HepG2 (cell line): ENCODE measurements at regions of chr1 and their contacts with region 1.

Region 1: DNA sequence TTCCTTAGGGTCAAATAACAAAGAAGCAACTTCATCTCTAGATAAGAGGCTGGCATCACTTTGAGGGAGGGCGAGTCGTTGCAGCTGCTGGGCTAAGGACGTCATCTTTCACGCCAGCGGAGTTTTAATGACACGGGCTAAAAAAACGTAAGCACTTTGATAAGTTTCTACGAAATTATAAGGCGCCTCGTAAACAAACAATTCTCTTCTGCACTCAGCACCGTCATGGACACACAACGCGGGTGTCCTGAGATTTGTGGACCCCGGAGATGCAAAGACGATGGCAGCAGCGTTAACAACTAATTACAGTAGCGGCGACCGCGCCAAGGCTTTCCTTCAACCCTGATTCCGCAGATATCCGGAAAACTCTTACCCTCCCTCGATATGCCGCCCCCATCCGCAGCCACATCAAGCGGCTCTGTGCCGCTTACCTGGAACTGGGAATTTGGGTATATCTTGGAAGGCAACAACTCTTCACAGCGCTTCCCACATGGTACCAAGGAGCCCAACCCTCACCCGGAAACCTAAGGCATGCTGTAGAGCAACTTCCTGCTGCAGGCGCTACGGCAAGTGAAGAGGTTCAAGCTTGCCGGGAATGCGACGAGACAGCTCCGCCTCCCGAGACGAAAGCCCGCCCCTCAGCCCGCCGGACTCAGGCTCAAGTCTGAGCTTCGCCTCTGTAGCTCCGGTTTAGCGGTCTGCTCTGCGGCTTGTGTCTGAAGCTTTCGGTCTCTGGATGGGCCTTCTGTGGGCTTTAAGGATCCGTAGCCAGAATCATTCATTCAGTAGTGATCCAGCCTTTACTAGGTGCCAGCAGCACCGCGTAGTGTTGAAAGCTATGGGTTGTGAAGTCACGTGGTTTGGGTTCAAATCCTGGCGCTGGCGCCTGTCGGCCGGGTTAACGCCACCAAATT is at the start of gene HEATR1:
- DNase-seq: peak; percentile 90
- ATAC-seq: peak; percentile 99
- H3K4me3 ChIP-seq: peak within 1 kb of the TSS; percentile 75 to 87 (median 82)
- H3K27ac ChIP-seq: peak within 1 kb of the TSS; percentile 54
- H3K4me1 ChIP-seq: peaks cover 15% of the 10 kb centered on the region
- H3K27me3 ChIP-seq: no peaks in the 10 kb centered on the region; a peak in 1 of 5 replicates
- CTCF ChIP-seq: no peak
- EP300 ChIP-seq: no peak; a peak in 1 of 4 replicates
- POLR2A ChIP-seq: peak; percentile 85
- RAD21 ChIP-seq: no peak
- total RNA-seq, gene HEATR1: 45.8 and 80.3 TPM in 2 replicates

Region 2: GRCh38 chr1:236868625-236869467 is 264.6 kb after region 1 on chr1:
- CTCF ChIA-PET with region 1: no interaction called
- POLR2A ChIA-PET with region 1: no interaction called
- in situ Hi-C with region 1: loop called (anchors 25 kb)
- intact Hi-C with region 1: loop called (anchors 2 kb)
- DNase-seq: peak; percentile 60
- ATAC-seq: peak; percentile 93
- H3K4me3 ChIP-seq: no peak overlapping the region
- H3K27ac ChIP-seq: no peak overlapping the region
- H3K4me1 ChIP-seq: peaks cover 5% of the 10 kb centered on the region; the same call in 1 of the 2 replicates
- H3K27me3 ChIP-seq: no peaks in the 10 kb centered on the region
- CTCF ChIP-seq: peak; percentile 88
- EP300 ChIP-seq: no peak
- POLR2A ChIP-seq: no peak
- RAD21 ChIP-seq: peak; percentile 82

Region 3: GRCh38 chr1:237562242-237562823 is 958.1 kb after region 1 on chr1:
- CTCF ChIA-PET with region 1: interaction called, 9 read pairs
- POLR2A ChIA-PET with region 1: no interaction called
- in situ Hi-C with region 1: loop called (anchors 10 kb)
- intact Hi-C with region 1: no loop called
- DNase-seq: peak; percentile 61
- ATAC-seq: peak; percentile 91
- H3K4me3 ChIP-seq: no peak overlapping the region
- H3K27ac ChIP-seq: no peak overlapping the region
- H3K4me1 ChIP-seq: peaks cover 5% of the 10 kb centered on the region; the same call in 1 of the 2 replicates
- H3K27me3 ChIP-seq: no peaks in the 10 kb centered on the region
- CTCF ChIP-seq: peak; percentile 53
- EP300 ChIP-seq: no peak
- POLR2A ChIP-seq: no peak
- RAD21 ChIP-seq: no peak